ENCODE measurements at regions of chr11 and their contacts with region 1.

Region 1: GRCh38 chr11:125201525-125202141 is 37.1 kb downstream of the PKNOX2 start:
- DNase-seq: peak; percentile 10
- H3K4me3 ChIP-seq: no peak overlapping the region
- H3K27ac ChIP-seq: no peak overlapping the region
- H3K4me1 ChIP-seq: no peaks in the 10 kb centered on the region
- H3K27me3 ChIP-seq: no peaks in the 10 kb centered on the region
- CTCF ChIP-seq: no peak

Region 2: GRCh38 chr11:125148743-125149142 is 52.9 kb before region 1 on chr11:
- CTCF ChIA-PET with region 1: no interaction called
- dilution Hi-C with region 1: no loop called
- in situ Hi-C with region 1: no loop called
- intact Hi-C with region 1: no loop called
- DNase-seq: no peak
- H3K4me3 ChIP-seq: no peak overlapping the region
- H3K27ac ChIP-seq: no peak overlapping the region
- H3K4me1 ChIP-seq: no peaks in the 10 kb centered on the region
- H3K27me3 ChIP-seq: peaks cover 3% of the 10 kb centered on the region
- CTCF ChIP-seq: no peak

Region 3: GRCh38 chr11:125253795-125254525 is 52.3 kb after region 1 on chr11:
- CTCF ChIA-PET with region 1: no interaction called
- dilution Hi-C with region 1: loop called (anchors 5 kb)
- in situ Hi-C with region 1: no loop called
- intact Hi-C with region 1: no loop called
- DNase-seq: no peak
- H3K4me3 ChIP-seq: no peak overlapping the region
- H3K27ac ChIP-seq: no peak overlapping the region
- H3K4me1 ChIP-seq: no peaks in the 10 kb centered on the region
- H3K27me3 ChIP-seq: no peaks in the 10 kb centered on the region
- CTCF ChIP-seq: no peak

Region 4: DNA sequence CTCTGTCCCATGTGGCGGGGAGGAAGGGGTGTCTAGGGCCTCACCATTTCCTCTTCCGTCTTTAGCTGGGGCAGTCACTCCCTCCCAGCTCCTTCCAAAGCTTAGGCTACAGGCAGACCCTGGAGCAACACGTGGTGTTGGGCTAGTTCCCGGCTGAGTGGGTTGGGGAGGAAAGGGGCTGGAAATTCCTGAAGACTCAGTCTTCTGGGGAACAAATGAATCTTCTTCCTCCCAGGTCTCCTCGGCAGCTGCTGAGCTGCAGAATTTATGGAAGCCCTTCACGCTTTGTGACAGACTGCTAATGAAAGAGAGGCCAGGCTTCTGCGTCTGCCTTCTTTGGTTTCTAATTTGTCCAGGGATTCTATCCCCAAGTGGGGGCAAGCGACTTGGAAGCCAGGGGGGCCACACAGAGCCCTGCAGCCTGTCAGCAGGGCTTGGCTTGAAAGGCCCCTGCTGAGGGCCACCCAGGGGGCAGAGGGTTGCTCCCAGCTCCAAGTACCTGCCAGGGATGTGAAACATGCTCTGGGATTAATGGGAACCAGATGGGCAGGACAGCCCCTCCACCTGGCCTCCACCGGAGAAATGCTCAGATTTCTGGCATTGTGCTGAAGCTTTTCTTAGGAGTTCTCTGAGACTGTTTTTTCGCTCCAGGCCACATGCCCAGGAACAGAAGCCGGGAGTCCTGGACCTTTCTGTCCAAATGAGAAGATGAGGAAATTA is 86.0 kb after region 1 on chr11:
- CTCF ChIA-PET with region 1: no interaction called
- dilution Hi-C with region 1: loop called (anchors 5 kb)
- in situ Hi-C with region 1: no loop called
- intact Hi-C with region 1: no loop called
- DNase-seq: no peak
- H3K4me3 ChIP-seq: no peak overlapping the region
- H3K27ac ChIP-seq: no peak overlapping the region
- H3K4me1 ChIP-seq: no peaks in the 10 kb centered on the region
- H3K27me3 ChIP-seq: no peaks in the 10 kb centered on the region
- CTCF ChIP-seq: no peak

Region 5: GRCh38 chr11:125315077-125315740 is 113.6 kb after region 1 on chr11:
- CTCF ChIA-PET with region 1: no interaction called
- dilution Hi-C with region 1: no loop called
- in situ Hi-C with region 1: no loop called
- intact Hi-C with region 1: no loop called
- DNase-seq: no peak
- H3K4me3 ChIP-seq: no peak overlapping the region
- H3K27ac ChIP-seq: no peak overlapping the region
- H3K4me1 ChIP-seq: no peaks in the 10 kb centered on the region
- H3K27me3 ChIP-seq: no peaks in the 10 kb centered on the region
- CTCF ChIP-seq: no peak

Measured in mammary epithelial cell (primary cell).